Natural killer cell (primary cell): ENCODE measurements at regions of chr12 and their contacts with region 1.

Region 1: GRCh38 chr12:1661553-1662335 is 29.1 kb upstream of the ADIPOR2 start:
- DNase-seq: peak; percentile 85 to 94
- ATAC-seq: peak; percentile 87 to 93 (median 87)
- H3K4me3 ChIP-seq: peak overlapping the region; percentile 42
- H3K4me3 Mint-ChIP-seq: peak overlapping the region; percentile 83
- H3K27ac ChIP-seq: peak overlapping the region; percentile 48
- H3K27ac Mint-ChIP-seq: peak overlapping the region; percentile 84 to 87
- H3K4me1 ChIP-seq: peaks cover 13% of the 10 kb centered on the region
- H3K4me1 Mint-ChIP-seq: peaks cover 30 to 39% of the 10 kb centered on the region in 2 donors
- H3K27me3 ChIP-seq: no peaks in the 10 kb centered on the region
- H3K27me3 Mint-ChIP-seq: no peaks in the 10 kb centered on the region
- CTCF ChIP-seq: no peak

Region 2: GRCh38 chr12:1630133-1630826 is 31.5 kb before region 1 on chr12:
- intact Hi-C with region 1: no loop called
- DNase-seq: peak in 1 of 2 donors; percentile 40
- ATAC-seq: peak; percentile 38 to 52 (median 40)
- H3K4me3 ChIP-seq: peak overlapping the region; percentile 15
- H3K4me3 Mint-ChIP-seq: peak overlapping the region; percentile 13
- H3K27ac ChIP-seq: no peak overlapping the region
- H3K27ac Mint-ChIP-seq: no peak overlapping the region
- H3K4me1 ChIP-seq: peaks cover 18% of the 10 kb centered on the region
- H3K4me1 Mint-ChIP-seq: peaks cover 4 to 22% of the 10 kb centered on the region in 2 donors
- H3K27me3 ChIP-seq: peaks cover 26% of the 10 kb centered on the region
- H3K27me3 Mint-ChIP-seq: peaks cover 45 to 69% of the 10 kb centered on the region in 2 donors
- CTCF ChIP-seq: no peak

Region 3: DNA sequence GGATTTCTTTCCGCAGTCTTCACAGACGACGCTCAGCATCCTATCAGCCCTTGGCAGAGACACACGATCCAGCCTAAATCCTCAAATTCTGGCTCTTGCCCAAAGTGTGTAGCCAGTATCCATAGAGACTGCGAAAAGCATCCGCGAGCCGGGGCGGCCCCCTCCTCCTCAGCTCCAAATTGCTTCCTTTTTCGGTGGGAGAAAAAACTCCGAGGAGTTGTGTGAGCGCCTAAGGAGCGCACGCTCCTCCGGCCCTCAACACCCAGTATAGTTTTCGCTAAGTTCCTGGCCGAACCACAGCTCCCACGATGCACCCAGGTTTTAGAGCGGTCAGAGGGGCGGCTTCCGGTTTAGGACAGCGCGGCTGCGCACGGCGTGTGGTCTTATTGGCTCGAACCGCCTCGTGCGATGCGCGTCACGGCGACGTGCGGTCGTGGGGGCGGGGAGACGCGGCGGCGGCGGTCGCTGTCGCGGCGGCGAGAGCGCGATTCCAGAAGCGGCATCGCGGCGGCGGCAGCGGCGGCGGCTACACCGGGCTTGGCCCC is 28.9 kb after region 1 on chr12 and contains the start of gene ADIPOR2:
- intact Hi-C with region 1: loop called (anchors 2 kb)
- DNase-seq: peak; percentile 95 to 98
- ATAC-seq: peak; percentile 95 to 99 (median 98)
- H3K4me3 ChIP-seq: peak within 1 kb of the TSS; percentile 86
- H3K4me3 Mint-ChIP-seq: peak within 1 kb of the TSS; percentile 97
- H3K27ac ChIP-seq: peak within 1 kb of the TSS; percentile 87
- H3K27ac Mint-ChIP-seq: peak within 1 kb of the TSS; percentile 97
- H3K4me1 ChIP-seq: peaks cover 14% of the 10 kb centered on the region
- H3K4me1 Mint-ChIP-seq: peaks cover 35 to 37% of the 10 kb centered on the region in 2 donors
- H3K27me3 ChIP-seq: no peaks in the 10 kb centered on the region
- H3K27me3 Mint-ChIP-seq: peaks cover 0 to 2% of the 10 kb centered on the region in 2 donors
- CTCF ChIP-seq: no peak
- total RNA-seq, gene ADIPOR2: 38.6 to 48.3 (median 44.0) TPM